Naive thymus-derived CD4-positive, alpha-beta T cell (primary cell): ENCODE measurements at regions of chr11 and their contacts with region 1.

Region 1: GRCh38 chr11:37134637-37135036 is 536.6 kb upstream of the RAG2 start:
- DNase-seq: no peak
- ATAC-seq: no peak
- H3K4me3 ChIP-seq: no peak overlapping the region
- H3K4me3 Mint-ChIP-seq: no peak overlapping the region
- H3K27ac ChIP-seq: no peak overlapping the region
- H3K27ac Mint-ChIP-seq: no peak overlapping the region
- H3K4me1 ChIP-seq: no peaks in the 10 kb centered on the region
- H3K4me1 Mint-ChIP-seq: no peaks in the 10 kb centered on the region
- H3K27me3 ChIP-seq: no peaks in the 10 kb centered on the region
- H3K27me3 Mint-ChIP-seq: no peaks in the 10 kb centered on the region

Region 2: GRCh38 chr11:37050311-37050710 is 84.3 kb before region 1 on chr11:
- CTCF ChIA-PET with region 1: no interaction called
- POLR2A ChIA-PET with region 1: no interaction called
- intact Hi-C with region 1: no loop called
- DNase-seq: no peak
- ATAC-seq: no peak
- H3K4me3 ChIP-seq: no peak overlapping the region
- H3K4me3 Mint-ChIP-seq: no peak overlapping the region
- H3K27ac ChIP-seq: no peak overlapping the region
- H3K27ac Mint-ChIP-seq: no peak overlapping the region
- H3K4me1 ChIP-seq: no peaks in the 10 kb centered on the region
- H3K4me1 Mint-ChIP-seq: no peaks in the 10 kb centered on the region
- H3K27me3 ChIP-seq: no peaks in the 10 kb centered on the region
- H3K27me3 Mint-ChIP-seq: no peaks in the 10 kb centered on the region

Region 3: DNA sequence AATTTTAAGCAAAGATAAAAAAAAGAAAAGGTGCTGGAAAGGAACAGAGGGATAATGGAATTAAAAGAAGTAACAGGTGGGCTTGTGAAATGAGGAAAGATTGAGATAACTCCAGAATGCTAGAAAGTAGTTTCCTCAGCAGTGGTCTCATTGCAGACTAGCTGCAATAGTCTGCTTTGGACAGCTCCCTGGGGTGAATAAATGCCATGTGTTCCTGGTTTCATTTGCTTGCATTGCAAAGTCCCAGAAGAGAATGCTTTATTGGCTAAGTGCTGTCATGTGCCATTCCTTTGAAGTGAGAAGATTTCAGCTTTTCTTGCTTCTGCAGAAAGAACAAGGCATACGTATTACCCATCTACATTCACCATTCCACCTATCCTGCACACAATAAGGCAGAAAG is 57.8 kb before region 1 on chr11:
- CTCF ChIA-PET with region 1: no interaction called
- POLR2A ChIA-PET with region 1: no interaction called
- intact Hi-C with region 1: loop called in 1 of 2 experiments (anchors 10 kb)
- DNase-seq: no peak
- ATAC-seq: no peak
- H3K4me3 ChIP-seq: no peak overlapping the region
- H3K4me3 Mint-ChIP-seq: no peak overlapping the region
- H3K27ac ChIP-seq: no peak overlapping the region
- H3K27ac Mint-ChIP-seq: no peak overlapping the region
- H3K4me1 ChIP-seq: no peaks in the 10 kb centered on the region
- H3K4me1 Mint-ChIP-seq: no peaks in the 10 kb centered on the region
- H3K27me3 ChIP-seq: no peaks in the 10 kb centered on the region
- H3K27me3 Mint-ChIP-seq: no peaks in the 10 kb centered on the region